Cardiac septum (tissue), 1 donor: ENCODE measurements at regions of chr10 and their contacts with region 1.

Region 1: DNA sequence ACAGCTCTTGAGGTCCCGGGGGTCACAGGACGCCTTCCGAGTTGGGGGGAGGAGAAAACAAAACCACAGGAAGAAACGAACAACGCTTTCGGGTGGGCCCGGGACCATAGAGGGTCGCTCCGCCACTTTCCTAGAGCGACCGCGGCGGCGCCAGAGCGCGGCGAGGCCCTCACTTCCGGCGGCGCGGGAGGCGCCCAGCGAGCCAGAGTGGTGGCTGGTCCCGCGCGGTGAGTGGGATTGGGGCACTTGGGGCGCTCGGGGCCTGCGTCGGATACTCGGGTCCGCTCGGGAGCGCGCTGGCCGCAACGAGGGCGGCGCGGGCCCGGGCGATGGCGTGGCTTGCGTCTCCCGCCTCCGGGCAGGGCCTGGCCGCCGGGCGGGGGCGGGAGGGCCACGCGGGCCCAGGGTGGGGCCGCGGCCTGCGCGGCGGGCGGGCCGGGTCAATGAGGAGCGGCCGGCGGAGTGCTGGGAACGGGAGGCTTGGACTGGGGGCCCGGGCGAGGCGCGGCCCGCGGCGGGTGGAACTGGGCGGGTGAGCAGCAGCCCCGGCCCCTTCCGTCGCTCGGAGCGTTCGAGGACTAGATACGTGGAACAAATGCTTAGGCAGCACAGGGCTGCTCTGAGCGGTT is at the start of gene ZNF22:
- DNase-seq: no peak
- total RNA-seq, gene ZNF22: 14.9 TPM

Region 2: DNA sequence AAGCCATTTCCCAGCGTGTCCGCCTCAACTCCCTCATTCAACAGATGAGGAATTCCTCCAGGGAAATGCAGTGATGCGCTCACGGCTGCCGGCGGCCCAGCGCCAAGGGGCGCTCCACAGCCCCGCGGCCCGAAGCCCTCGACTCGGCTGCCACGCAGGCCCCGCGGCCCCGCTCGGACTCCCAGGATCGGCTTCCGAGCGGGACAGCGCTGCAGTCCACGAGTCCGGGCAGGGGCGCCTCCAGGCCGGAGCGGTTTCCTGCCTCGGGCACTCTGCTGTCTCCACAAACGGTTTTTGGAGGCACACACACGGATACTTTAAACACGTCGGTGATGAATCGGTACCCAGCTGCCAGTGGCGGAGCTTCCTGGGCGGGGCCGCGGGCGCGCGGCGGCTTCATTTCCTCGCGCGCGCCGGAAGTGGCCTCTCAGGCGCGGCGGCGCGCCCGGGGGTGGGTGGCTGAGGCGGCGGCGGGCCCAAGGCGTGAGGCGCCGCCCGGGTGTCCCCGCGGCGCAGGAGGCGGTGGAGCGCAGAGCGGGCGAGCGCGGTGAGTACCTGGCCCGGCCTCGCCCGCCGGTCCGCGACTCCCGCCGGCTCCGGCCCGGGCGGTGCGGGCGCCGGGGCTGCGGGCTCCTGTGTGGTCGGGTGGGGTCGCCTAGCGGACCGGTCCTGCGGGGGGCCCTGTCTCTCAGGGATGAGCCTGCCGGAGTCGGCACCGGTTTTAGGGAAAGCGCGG is 1862.7 kb before region 1 on chr10 and contains the start of gene CSGALNACT2:
- intact Hi-C with region 1: loop called (anchors 5 kb)
- DNase-seq: peak; percentile 93
- total RNA-seq, gene CSGALNACT2: 14.2 TPM

Region 3: DNA sequence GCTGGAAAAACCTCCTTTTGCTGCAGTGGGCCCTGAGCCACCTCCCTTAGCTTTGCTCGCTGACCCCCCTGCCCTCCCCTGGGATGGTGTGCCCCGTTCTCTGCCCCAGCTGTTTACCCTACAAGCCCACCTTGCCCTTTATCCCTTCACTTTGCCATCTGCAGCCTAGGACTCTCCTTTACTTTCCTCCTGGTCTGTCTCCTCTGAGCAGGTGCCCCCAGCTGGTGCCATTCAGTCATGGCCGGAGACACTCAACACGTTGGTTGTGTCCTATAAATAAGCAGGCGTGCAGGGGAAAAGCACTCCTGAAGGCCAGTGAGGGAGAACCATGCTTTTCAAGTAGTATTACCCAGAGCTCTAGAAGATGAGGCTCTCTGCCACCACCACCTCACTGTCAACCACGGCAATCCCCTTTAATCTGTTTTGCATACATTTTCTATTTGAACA is 35.2 kb before region 1 on chr10:
- intact Hi-C with region 1: loop called (anchors 5 kb)
- DNase-seq: no peak